Gastrocnemius medialis (tissue), 4 donors: ENCODE measurements at regions of chr14 and their contacts with region 1.

Region 1: DNA sequence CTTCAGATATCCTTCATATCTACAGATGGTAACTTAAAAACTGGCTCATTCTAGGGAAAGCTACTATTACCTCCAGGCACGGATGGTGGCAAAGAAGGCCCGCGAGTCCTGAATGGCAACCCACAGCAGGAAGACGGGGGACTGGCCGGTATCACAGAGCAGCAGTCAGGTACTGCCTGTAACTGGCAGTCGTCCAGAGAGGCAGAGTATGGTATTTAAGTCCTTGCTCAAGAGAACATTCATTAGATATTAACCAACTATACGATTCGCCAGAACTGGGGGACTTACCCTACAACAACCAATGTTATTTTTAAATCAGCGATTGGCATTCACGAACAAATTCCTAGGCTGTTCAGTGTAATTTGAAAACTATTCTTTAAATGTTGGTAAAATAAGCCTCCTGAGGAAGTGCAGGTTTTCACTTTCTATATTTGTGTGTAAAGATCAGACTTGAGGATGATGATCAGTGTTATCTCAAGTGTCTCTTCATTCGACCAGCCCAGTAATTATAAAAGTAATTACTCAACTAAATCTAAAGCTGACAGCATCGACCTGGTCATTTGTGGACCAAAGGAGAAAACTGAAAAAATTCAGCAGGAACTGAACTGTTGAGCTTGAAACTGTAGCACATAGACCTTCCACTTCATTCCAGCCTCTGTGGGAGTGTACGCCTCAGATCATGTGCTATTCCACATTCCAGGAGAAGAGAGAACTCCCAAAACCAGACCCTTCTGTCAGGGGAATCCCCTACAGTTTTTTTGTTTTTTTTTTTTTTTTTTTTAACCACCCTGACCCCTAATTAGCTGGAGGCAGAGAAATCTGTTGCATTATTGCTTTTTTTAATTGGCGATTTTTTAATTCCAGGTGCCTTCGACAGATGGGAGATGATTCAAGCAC is 75.6 kb downstream of the ESR2 start:
- DNase-seq: peak; percentile 65 to 67
- ATAC-seq: no peak
- H3K4me3 ChIP-seq: peak overlapping the region in 2 of 4 donors; percentile 3 to 28
- H3K27ac ChIP-seq: peak overlapping the region; percentile 89 to 99 (median 96)
- H3K4me1 ChIP-seq: peaks cover 75 to 85% of the 10 kb centered on the region in 2 donors
- H3K27me3 ChIP-seq: no peaks in the 10 kb centered on the region
- CTCF ChIP-seq: no peak
- POLR2A ChIP-seq: peak in 1 of 2 donors; percentile 27

Region 2: GRCh38 chr14:63863004-63863403 is 355.6 kb before region 1 on chr14:
- in situ Hi-C with region 1: no loop called
- intact Hi-C with region 1: loop called (anchors 5 kb)
- DNase-seq: no peak
- ATAC-seq: no peak
- H3K4me3 ChIP-seq: no peak overlapping the region
- H3K27ac ChIP-seq: peak overlapping the region; percentile 39 to 79 (median 79)
- H3K4me1 ChIP-seq: peaks cover 25 to 28% of the 10 kb centered on the region in 2 donors
- H3K27me3 ChIP-seq: no peaks in the 10 kb centered on the region
- CTCF ChIP-seq: no peak
- POLR2A ChIP-seq: no peak

Region 3: GRCh38 chr14:64060648-64061096 is 157.9 kb before region 1 on chr14:
- in situ Hi-C with region 1: no loop called
- intact Hi-C with region 1: no loop called
- DNase-seq: peak in 1 of 2 donors; percentile 38
- ATAC-seq: peak; percentile 56 to 90
- H3K4me3 ChIP-seq: no peak overlapping the region
- H3K27ac ChIP-seq: no peak overlapping the region
- H3K4me1 ChIP-seq: no peaks in the 10 kb centered on the region
- H3K27me3 ChIP-seq: no peaks in the 10 kb centered on the region
- CTCF ChIP-seq: peak; percentile 32 to 61 (median 51)
- POLR2A ChIP-seq: no peak

Region 4: DNA sequence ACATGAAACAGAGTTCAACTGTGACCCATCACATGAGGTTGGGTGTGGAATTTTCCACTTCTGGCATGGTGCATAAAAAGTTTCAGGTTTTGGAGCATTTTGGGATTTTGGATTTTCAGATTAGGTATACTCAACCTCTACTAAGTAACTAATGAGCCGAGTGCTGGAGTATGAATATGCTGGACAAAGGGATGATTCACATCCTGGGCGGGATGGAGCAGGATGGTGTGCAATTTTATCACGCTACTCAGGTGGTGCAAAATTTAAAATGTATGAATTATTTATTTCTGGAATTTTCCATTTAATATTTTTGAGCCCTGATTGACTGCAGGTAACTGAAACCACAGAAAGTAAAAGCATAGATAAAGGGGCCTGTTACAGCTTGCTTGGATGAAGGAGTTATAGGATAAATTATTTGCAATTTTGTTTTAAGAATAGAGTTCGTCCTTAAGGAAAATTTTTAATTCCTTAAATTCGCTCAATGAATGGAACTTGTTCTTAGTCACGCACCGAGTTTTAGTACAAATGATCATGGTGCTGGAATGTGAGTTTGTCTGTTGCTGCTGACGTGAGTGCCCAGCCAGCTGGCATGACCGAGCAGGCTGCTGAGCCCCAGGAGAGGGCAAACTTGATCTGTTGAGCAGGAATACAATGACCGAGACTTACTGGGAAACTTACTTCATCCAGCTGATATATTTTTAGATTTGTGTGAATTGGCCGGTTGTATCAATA is 100.8 kb before region 1 on chr14:
- in situ Hi-C with region 1: no loop called
- intact Hi-C with region 1: loop called (anchors 2 kb)
- DNase-seq: peak; percentile 84 to 90
- ATAC-seq: peak; percentile 71 to 79
- H3K4me3 ChIP-seq: no peak overlapping the region
- H3K27ac ChIP-seq: peak overlapping the region; percentile 89 to 94 (median 92)
- H3K4me1 ChIP-seq: peaks cover 34 to 61% of the 10 kb centered on the region in 2 donors
- H3K27me3 ChIP-seq: no peaks in the 10 kb centered on the region
- CTCF ChIP-seq: no peak
- POLR2A ChIP-seq: no peak

Region 5: GRCh38 chr14:64260418-64260817 is 41.8 kb after region 1 on chr14:
- in situ Hi-C with region 1: no loop called
- intact Hi-C with region 1: no loop called
- DNase-seq: no peak
- ATAC-seq: no peak
- H3K4me3 ChIP-seq: no peak overlapping the region
- H3K27ac ChIP-seq: no peak overlapping the region
- H3K4me1 ChIP-seq: no peaks in the 10 kb centered on the region
- H3K27me3 ChIP-seq: no peaks in the 10 kb centered on the region
- CTCF ChIP-seq: no peak
- POLR2A ChIP-seq: no peak